ENCODE measurements at regions of chr18 and their contacts with region 1.

Region 1: DNA sequence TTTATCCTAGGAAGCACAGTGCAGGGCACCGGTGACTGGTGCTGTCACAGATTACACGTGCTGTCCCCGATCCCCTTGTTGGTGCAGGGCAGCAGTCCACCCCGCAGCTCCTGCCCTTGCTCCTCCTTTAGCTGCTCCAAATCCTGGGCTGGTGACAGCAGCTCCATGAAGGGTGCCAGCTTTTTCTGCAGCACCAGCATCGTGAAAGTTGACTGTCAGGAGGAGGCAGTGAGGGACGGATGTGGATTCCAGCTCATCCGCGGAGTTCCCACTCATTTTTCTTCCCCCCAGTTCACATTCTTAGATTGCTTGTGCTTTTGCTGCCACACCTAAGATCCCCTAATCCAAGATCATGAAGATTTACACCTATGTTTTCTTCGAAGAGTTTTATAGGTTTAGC is 67.5 kb downstream of the ONECUT2 start:
- DNase-seq: no peak
- ATAC-seq: no peak
- H3K4me3 ChIP-seq: no peak overlapping the region
- H3K27ac ChIP-seq: no peak overlapping the region
- H3K4me1 ChIP-seq: no peaks in the 10 kb centered on the region
- H3K27me3 ChIP-seq: peaks cover 2% of the 10 kb centered on the region; the same call in 1 of the 2 replicates
- CTCF ChIP-seq: no peak

Region 2: DNA sequence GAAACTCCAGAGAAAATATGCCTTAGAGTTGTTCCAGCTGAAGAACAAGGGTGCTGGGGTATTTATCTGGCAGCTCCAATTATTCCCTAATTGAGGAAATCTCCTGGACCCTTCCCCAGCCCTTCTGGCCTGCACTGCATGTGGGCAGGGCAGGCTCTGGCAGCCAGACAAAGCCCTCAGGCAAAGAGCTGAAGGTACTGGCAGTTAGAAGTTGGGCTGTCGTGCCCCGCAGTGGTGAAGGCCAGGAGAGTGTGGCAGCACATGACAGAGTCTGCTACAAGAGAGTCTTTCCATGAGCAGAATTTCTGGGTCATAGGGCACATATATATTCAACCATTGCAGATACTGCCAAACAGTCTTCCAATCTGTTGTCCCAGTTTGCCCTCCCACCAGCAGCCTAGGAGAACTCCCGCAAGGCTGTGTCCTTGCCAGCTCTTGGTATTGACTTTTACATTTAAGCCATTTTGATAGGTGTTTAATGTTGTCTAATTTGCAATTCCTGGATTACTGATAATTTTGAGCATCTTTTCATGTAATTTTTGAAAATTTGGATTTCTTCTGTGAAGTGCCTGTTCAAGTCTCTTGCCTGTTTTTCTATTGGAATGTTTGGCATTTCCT is 40.9 kb before region 1 on chr18:
- CTCF ChIA-PET with region 1: no interaction called
- POLR2A ChIA-PET with region 1: interaction called, 10 read pairs
- in situ Hi-C with region 1: no loop called
- intact Hi-C with region 1: no loop called
- DNase-seq: no peak
- ATAC-seq: no peak
- H3K4me3 ChIP-seq: no peak overlapping the region
- H3K27ac ChIP-seq: no peak overlapping the region
- H3K4me1 ChIP-seq: no peaks in the 10 kb centered on the region
- H3K27me3 ChIP-seq: no peaks in the 10 kb centered on the region
- CTCF ChIP-seq: no peak

Region 3: GRCh38 chr18:57715681-57716080 is 213.1 kb after region 1 on chr18:
- CTCF ChIA-PET with region 1: no interaction called
- POLR2A ChIA-PET with region 1: no interaction called
- in situ Hi-C with region 1: no loop called
- intact Hi-C with region 1: no loop called
- DNase-seq: no peak
- ATAC-seq: no peak
- H3K4me3 ChIP-seq: no peak overlapping the region
- H3K27ac ChIP-seq: no peak overlapping the region
- H3K4me1 ChIP-seq: peaks cover 8% of the 10 kb centered on the region
- H3K27me3 ChIP-seq: no peaks in the 10 kb centered on the region
- CTCF ChIP-seq: no peak

Region 4: DNA sequence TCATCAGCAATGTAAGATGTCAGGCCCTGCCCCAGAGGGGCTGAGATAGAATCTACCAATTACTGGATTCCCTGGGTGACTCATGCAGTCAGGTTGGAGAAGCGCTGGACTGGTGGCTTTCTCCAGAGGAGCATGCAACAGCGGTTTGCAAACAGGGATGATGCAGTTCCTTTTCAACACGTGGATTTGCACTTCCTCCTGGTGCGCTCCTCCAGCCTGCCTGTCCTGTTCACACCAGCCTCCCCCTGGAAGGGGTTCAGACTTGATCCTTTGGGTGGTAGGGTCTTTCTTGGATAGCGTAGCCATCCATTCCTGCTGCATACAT is 699.7 kb after region 1 on chr18:
- CTCF ChIA-PET with region 1: no interaction called
- POLR2A ChIA-PET with region 1: no interaction called
- in situ Hi-C with region 1: no loop called
- intact Hi-C with region 1: no loop called
- DNase-seq: no peak
- ATAC-seq: no peak
- H3K4me3 ChIP-seq: no peak overlapping the region
- H3K27ac ChIP-seq: no peak overlapping the region
- H3K4me1 ChIP-seq: no peaks in the 10 kb centered on the region; the same call in 1 of the 2 replicates
- H3K27me3 ChIP-seq: no peaks in the 10 kb centered on the region
- CTCF ChIP-seq: no peak

Measured in Panc1 (cell line).